Activated B cell treated with CpG ODN at 0.5 μM for 24 hours (primary cell): ENCODE measurements at regions of chr9 and their contacts with region 1.

Region 1: DNA sequence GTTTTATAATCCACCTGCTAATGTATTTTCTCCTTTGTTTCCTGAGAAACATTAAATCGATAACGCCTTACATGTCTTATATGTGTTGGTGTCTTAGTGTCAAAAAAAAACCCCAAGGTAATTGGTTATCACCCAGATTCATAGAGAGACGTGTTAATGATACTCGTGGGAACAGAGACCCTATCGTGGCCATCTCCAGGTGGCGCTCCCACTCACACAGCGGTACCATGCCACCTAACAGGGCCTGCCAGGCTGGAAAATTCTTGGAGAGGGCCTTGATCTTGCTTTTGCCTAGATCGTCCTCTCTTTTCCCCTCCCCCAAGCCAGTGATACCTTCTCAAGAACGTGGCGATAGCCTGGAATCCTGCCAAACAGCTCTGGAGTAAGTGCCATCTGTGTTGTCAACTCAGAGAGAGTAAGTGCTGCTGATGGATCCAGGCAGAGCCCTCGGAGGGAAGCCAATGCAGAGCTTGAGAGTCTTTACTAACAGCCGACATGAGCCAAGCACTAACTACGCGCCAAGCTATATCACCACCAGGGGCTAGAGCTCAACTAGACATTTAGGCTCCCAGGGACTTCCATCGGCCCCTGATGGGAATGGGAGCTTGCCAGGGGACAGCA is 17.8 kb downstream of the RAPGEF1 start:
- DNase-seq: no peak
- ATAC-seq: no peak
- H3K4me3 Mint-ChIP-seq: no peak overlapping the region
- H3K27ac Mint-ChIP-seq: peak overlapping the region; percentile 35
- H3K4me1 Mint-ChIP-seq: peaks cover 94% of the 10 kb centered on the region
- H3K27me3 Mint-ChIP-seq: no peaks in the 10 kb centered on the region
- CTCF ChIP-seq: no peak

Region 2: GRCh38 chr9:131641618-131642495 is 80.3 kb before region 1 on chr9:
- CTCF ChIA-PET with region 1: no interaction called
- POLR2A ChIA-PET with region 1: interaction called, 12 read pairs
- intact Hi-C with region 1: no loop called
- DNase-seq: no peak
- ATAC-seq: no peak
- H3K4me3 Mint-ChIP-seq: no peak overlapping the region
- H3K27ac Mint-ChIP-seq: peak overlapping the region; percentile 86
- H3K4me1 Mint-ChIP-seq: peaks cover 42% of the 10 kb centered on the region
- H3K27me3 Mint-ChIP-seq: no peaks in the 10 kb centered on the region
- CTCF ChIP-seq: no peak

Region 3: GRCh38 chr9:131762356-131762932 is 40.3 kb after region 1 on chr9:
- CTCF ChIA-PET with region 1: no interaction called
- POLR2A ChIA-PET with region 1: no interaction called
- intact Hi-C with region 1: no loop called
- DNase-seq: peak; percentile 79
- ATAC-seq: peak; percentile 98
- H3K4me3 Mint-ChIP-seq: no peak overlapping the region
- H3K27ac Mint-ChIP-seq: no peak overlapping the region
- H3K4me1 Mint-ChIP-seq: no peaks in the 10 kb centered on the region
- H3K27me3 Mint-ChIP-seq: peaks cover 15% of the 10 kb centered on the region
- CTCF ChIP-seq: peak; percentile 66